T-cell (primary cell): ENCODE measurements at regions of chr1 and their contacts with region 1.

Region 1: DNA sequence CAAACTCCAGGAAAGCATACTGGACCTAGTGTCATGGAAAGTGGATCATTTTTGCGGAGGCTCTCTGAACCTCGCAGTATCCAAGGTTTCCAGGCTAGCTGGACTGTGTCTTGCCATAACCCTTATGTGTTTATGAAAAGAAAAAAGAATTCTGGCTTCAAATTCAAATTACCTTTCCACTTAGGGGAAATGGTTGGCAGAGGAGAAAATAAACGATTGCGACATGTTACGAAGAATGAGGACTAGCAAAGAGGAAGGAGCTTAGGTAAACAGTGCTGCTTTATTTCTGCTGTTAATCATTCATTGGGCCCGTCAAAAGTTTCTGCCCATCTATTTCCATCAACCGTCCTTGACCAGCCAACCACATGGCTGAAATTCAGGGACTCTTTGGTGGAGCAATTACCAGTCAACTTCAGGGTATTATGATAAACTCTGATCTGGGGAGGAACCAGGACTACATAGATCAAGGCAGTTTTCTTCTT is at the start of gene C4BPA:
- DNase-seq: no peak
- ATAC-seq: no peak
- H3K4me3 ChIP-seq: no peak within 1 kb of the TSS
- H3K4me3 Mint-ChIP-seq: no peak within 1 kb of the TSS
- H3K27ac ChIP-seq: no peak within 1 kb of the TSS
- H3K27ac Mint-ChIP-seq: no peak within 1 kb of the TSS
- H3K4me1 ChIP-seq: no peaks in the 10 kb centered on the region
- H3K4me1 Mint-ChIP-seq: no peaks in the 10 kb centered on the region
- H3K27me3 ChIP-seq: peaks cover 0 to 3% of the 10 kb centered on the region in 2 experiments
- H3K27me3 Mint-ChIP-seq: peaks cover 0 to 19% of the 10 kb centered on the region in 2 donors
- total RNA-seq, gene C4BPA: 0.60 to 0.72 (median 0.70) TPM in 3 of 5 donors, not detected in the others

Region 2: GRCh38 chr1:207191061-207191460 is 87.1 kb after region 1 on chr1:
- CTCF ChIA-PET with region 1: interaction called in 1 of 2 experiments, 10 read pairs
- POLR2A ChIA-PET with region 1: no interaction called
- DNase-seq: no peak
- ATAC-seq: no peak
- H3K4me3 ChIP-seq: no peak overlapping the region
- H3K4me3 Mint-ChIP-seq: no peak overlapping the region
- H3K27ac ChIP-seq: no peak overlapping the region
- H3K27ac Mint-ChIP-seq: no peak overlapping the region
- H3K4me1 ChIP-seq: peaks cover 0 to 6% of the 10 kb centered on the region in 2 experiments
- H3K4me1 Mint-ChIP-seq: peaks cover 14 to 25% (median 20%) of the 10 kb centered on the region in 3 donors
- H3K27me3 ChIP-seq: peaks cover 0 to 5% of the 10 kb centered on the region in 2 experiments
- H3K27me3 Mint-ChIP-seq: peaks cover 4 to 5% of the 10 kb centered on the region in 2 donors